ENCODE measurements at regions of chr20 and their contacts with region 1.

Region 1: DNA sequence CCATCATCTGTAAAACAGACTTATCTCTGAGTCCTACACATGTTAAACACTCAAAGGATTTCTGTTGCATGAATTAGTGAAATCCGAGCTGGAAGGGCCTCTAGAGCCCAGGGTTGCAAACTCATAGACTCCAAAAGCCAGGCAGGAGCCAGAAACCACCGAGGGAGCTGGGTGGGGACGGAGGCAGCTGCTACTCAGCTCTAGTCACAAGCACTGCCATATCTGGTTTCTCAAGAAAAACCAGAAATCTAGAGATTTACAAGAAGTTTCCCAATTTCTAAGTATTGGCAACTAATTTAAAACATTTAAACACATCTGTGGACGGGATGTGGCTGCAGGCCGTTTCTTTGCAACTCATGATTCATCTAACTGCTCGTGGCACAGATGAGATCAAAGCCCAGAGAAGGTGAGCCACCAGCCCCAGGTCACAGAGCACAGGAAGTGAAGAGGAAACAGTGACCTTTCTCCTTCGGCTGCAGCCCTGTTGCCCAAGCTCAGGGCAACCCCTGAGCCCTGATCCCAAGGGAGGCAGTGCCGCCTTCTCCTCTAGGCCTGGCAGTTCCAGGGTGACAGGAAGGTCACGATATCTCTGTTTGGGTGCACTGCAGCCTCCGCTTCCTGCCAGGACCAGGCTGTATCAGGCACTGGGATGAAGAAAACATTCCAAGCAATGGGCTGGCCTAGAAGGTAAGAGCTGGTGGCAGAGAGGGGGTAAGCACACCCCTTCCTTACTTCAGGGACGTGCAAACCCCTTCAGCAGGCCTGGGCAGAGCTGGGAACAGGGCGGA is 26.4 kb upstream of the PTGIS start:
- DNase-seq: no peak

Region 2: GRCh38 chr20:49559401-49560081 is 34.8 kb before region 1 on chr20:
- intact Hi-C with region 1: loop called (anchors 5 kb)
- DNase-seq: peak; percentile 1

Region 3: GRCh38 chr20:49567421-49568334 is 26.7 kb before region 1 on chr20 and contains the start of gene PTGIS:
- intact Hi-C with region 1: loop called (anchors 2 kb)
- DNase-seq: peak; percentile 60
- total RNA-seq, gene PTGIS: 37.6 TPM

Region 4: GRCh38 chr20:49578436-49578835 is 15.9 kb before region 1 on chr20:
- intact Hi-C with region 1: no loop called
- DNase-seq: peak; percentile 47